ENCODE measurements at regions of chr2 and their contacts with region 1.

Region 1: GRCh38 chr2:25197336-25198208 is 29.2 kb upstream of the POMC start:
- DNase-seq: no peak
- ATAC-seq: no peak
- H3K4me3 Mint-ChIP-seq: no peak overlapping the region
- H3K27ac Mint-ChIP-seq: no peak overlapping the region
- H3K4me1 Mint-ChIP-seq: peaks cover 6% of the 10 kb centered on the region
- H3K27me3 Mint-ChIP-seq: no peaks in the 10 kb centered on the region
- CTCF ChIP-seq: no peak

Region 2: DNA sequence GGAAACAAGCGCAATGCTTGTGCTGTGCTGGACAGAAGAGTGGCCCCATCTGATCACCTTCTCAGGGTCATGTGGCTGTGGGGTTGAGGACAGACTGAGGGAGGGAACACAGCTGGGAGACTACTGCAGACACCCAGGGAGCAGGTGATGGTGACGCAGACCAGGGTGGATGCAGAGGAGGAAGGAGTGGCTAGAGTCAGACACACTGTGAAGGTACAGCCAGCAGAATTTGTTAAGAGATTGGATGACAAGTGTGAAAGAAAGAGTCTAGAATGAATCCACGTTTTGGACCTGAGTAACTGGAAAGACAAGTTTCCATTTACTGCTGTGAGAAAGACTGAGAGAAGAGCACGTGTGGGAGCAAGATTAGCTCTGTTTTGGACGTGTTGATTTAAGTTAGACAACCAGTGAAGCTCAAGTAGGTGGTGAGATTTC is 13.3 kb before region 1 on chr2:
- CTCF ChIA-PET with region 1: interaction called, 12 read pairs
- POLR2A ChIA-PET with region 1: no interaction called
- intact Hi-C with region 1: no loop called
- DNase-seq: no peak
- ATAC-seq: no peak
- H3K4me3 Mint-ChIP-seq: no peak overlapping the region
- H3K27ac Mint-ChIP-seq: no peak overlapping the region
- H3K4me1 Mint-ChIP-seq: no peaks in the 10 kb centered on the region
- H3K27me3 Mint-ChIP-seq: peaks cover 1% of the 10 kb centered on the region
- CTCF ChIP-seq: no peak